ENCODE measurements at regions of chr19 and their contacts with region 1.

Region 1: GRCh38 chr19:51016798-51017683 is 2.5 kb downstream of the KLK10 start:
- DNase-seq: peak; percentile 51
- ATAC-seq: no peak
- H3K4me3 Mint-ChIP-seq: no peak overlapping the region
- H3K27ac Mint-ChIP-seq: no peak overlapping the region
- H3K4me1 Mint-ChIP-seq: peaks cover 18% of the 10 kb centered on the region
- H3K27me3 Mint-ChIP-seq: peaks cover 55% of the 10 kb centered on the region

Region 2: GRCh38 chr19:50983625-50984292 is 33.3 kb before region 1 on chr19 and contains the start of gene KLK7:
- CTCF ChIA-PET with region 1: no interaction called
- POLR2A ChIA-PET with region 1: no interaction called
- intact Hi-C with region 1: no loop called
- DNase-seq: no peak
- ATAC-seq: no peak
- H3K4me3 Mint-ChIP-seq: no peak within 1 kb of the TSS
- H3K27ac Mint-ChIP-seq: no peak within 1 kb of the TSS
- H3K4me1 Mint-ChIP-seq: no peaks in the 10 kb centered on the region
- H3K27me3 Mint-ChIP-seq: peaks cover 33% of the 10 kb centered on the region
- total RNA-seq, gene KLK7: not detected

Region 3: DNA sequence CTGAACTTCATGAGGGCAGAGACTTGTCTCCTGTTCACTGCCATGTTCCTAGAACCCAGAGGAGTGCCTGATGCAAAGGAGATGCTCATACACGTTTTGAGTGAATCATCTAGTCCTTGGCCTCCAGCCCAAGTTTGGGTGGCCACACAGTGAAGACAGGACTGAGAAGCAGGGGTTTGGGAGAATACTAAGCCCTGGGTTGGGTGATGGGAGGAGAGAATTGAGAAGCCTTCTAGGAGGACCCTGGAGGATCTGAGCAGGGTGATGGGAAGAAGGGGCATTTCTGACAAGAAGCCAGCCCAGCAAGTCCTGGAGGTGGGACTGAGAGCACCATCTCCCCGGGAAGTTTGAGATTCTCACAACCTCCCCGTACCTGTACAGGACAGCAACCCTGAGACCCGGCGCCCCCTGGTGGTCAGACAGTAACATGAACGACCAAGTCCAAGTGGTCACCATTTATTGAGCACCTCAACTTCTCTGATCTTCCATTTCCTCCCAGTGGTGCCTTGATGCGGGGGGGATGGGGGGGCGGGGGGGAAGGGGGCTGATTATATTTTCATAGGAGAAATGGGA is 80.2 kb after region 1 on chr19:
- CTCF ChIA-PET with region 1: interaction called, 10 read pairs
- POLR2A ChIA-PET with region 1: no interaction called
- intact Hi-C with region 1: loop called in 1 of 2 experiments (anchors 1 kb)
- DNase-seq: peak; percentile 87
- ATAC-seq: peak; percentile 67
- H3K4me3 Mint-ChIP-seq: no peak overlapping the region
- H3K27ac Mint-ChIP-seq: no peak overlapping the region
- H3K4me1 Mint-ChIP-seq: peaks cover 20% of the 10 kb centered on the region
- H3K27me3 Mint-ChIP-seq: no peaks in the 10 kb centered on the region

Region 4: DNA sequence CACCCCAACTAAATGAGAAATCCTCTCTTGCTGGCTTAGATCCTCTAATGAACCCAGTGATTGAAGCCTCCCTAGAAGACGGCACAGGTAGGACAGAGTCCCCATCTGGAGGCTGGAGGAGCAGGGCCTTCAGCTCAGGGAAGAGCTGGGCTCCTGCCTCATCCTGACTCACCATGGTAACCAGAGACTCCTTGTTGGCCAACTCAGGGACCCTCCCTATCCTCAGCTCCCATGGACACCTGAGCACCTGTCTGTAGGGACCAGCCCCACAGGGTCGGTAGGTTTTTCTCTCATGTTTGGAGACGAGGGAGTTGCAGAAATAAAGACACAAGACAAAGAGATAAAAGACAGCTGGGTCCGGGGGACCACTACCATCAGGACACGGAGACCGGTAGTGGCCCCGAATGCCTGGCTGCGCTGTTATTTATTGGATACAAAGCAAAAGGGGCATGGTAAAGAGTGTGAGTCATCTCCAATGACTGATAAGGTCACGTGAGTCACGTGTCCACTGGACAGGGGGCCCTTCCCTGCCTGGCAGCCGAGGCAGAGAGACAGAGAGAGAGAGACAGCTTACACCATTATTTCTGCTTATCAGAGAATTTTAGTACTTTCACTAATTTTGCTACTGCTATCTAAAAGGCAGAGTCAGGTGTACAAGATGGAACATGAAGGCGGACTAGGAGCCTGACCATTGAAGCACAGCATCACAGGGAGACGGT is 151.7 kb after region 1 on chr19:
- CTCF ChIA-PET with region 1: no interaction called
- POLR2A ChIA-PET with region 1: no interaction called
- intact Hi-C with region 1: loop called in 1 of 2 experiments (anchors 1 kb)
- DNase-seq: no peak
- ATAC-seq: no peak
- H3K4me3 Mint-ChIP-seq: no peak overlapping the region
- H3K27ac Mint-ChIP-seq: no peak overlapping the region
- H3K4me1 Mint-ChIP-seq: peaks cover 12% of the 10 kb centered on the region
- H3K27me3 Mint-ChIP-seq: peaks cover 3% of the 10 kb centered on the region

Region 5: GRCh38 chr19:51210191-51210784 is 193.2 kb after region 1 on chr19:
- CTCF ChIA-PET with region 1: no interaction called
- POLR2A ChIA-PET with region 1: no interaction called
- intact Hi-C with region 1: no loop called
- DNase-seq: no peak
- ATAC-seq: no peak
- H3K4me3 Mint-ChIP-seq: no peak overlapping the region
- H3K27ac Mint-ChIP-seq: no peak overlapping the region
- H3K4me1 Mint-ChIP-seq: no peaks in the 10 kb centered on the region
- H3K27me3 Mint-ChIP-seq: peaks cover 17% of the 10 kb centered on the region

Region 6: GRCh38 chr19:51246164-51246552 is 229.1 kb after region 1 on chr19:
- CTCF ChIA-PET with region 1: no interaction called
- POLR2A ChIA-PET with region 1: no interaction called
- intact Hi-C with region 1: no loop called
- DNase-seq: no peak
- ATAC-seq: peak; percentile 44
- H3K4me3 Mint-ChIP-seq: no peak overlapping the region
- H3K27ac Mint-ChIP-seq: no peak overlapping the region
- H3K4me1 Mint-ChIP-seq: peaks cover 3% of the 10 kb centered on the region
- H3K27me3 Mint-ChIP-seq: peaks cover 10% of the 10 kb centered on the region